ENCODE measurements at regions of chr13 and their contacts with region 1.

Region 1: GRCh38 chr13:97432917-97433726 is 847 bp upstream of the RAP2A start:
- DNase-seq: peak; percentile 98 to 99 (median 99)
- H3K4me3 ChIP-seq: peak overlapping the region; percentile 66 to 99 (median 90)
- H3K27ac ChIP-seq: peak overlapping the region; percentile 89 to 100 (median 100)
- H3K27me3 ChIP-seq: no peaks in the 10 kb centered on the region
- CTCF ChIP-seq: peak in 24 of 56 donors; percentile 1 to 46 (median 19)

Region 2: GRCh38 chr13:97221989-97222700 is 211.0 kb before region 1 on chr13 and contains the start of gene MBNL2:
- intact Hi-C with region 1: loop called (anchors 5 kb)
- DNase-seq: peak; percentile 91 to 99 (median 98)
- H3K4me3 ChIP-seq: peak within 1 kb of the TSS; percentile 54 to 96 (median 79)
- H3K27ac ChIP-seq: peak within 1 kb of the TSS; percentile 52 to 97 (median 92)
- H3K27me3 ChIP-seq: no peaks in the 10 kb centered on the region
- CTCF ChIP-seq: peak in 18 of 56 donors; percentile 3 to 38 (median 10)
- total RNA-seq, gene MBNL2: 96.2 to 275 (median 181) TPM

Region 3: GRCh38 chr13:97474349-97474980 is 41.3 kb after region 1 on chr13:
- intact Hi-C with region 1: loop called in 1 of 2 experiments (anchors 5 kb)
- DNase-seq: no peak
- H3K4me3 ChIP-seq: no peak overlapping the region
- H3K27ac ChIP-seq: no peak overlapping the region
- H3K27me3 ChIP-seq: no peaks in the 10 kb centered on the region
- CTCF ChIP-seq: no peak

Region 4: GRCh38 chr13:97724450-97724849 is 291.3 kb after region 1 on chr13:
- intact Hi-C with region 1: loop called in 1 of 2 experiments (anchors 5 kb)
- DNase-seq: peak in 1 of 10 donors; percentile 22
- H3K4me3 ChIP-seq: no peak overlapping the region
- H3K27ac ChIP-seq: peak overlapping the region in 49 of 59 donors; percentile 5 to 91 (median 68)
- H3K27me3 ChIP-seq: no peaks in the 10 kb centered on the region
- CTCF ChIP-seq: no peak

Region 5: GRCh38 chr13:97975848-97976609 is 542.9 kb after region 1 on chr13:
- intact Hi-C with region 1: loop called in 1 of 2 experiments (anchors 10 kb)
- DNase-seq: peak; percentile 74 to 95 (median 88)
- H3K4me3 ChIP-seq: peak overlapping the region; percentile 63 to 97 (median 87)
- H3K27ac ChIP-seq: peak overlapping the region; percentile 23 to 98 (median 90)
- H3K27me3 ChIP-seq: no peaks in the 10 kb centered on the region
- CTCF ChIP-seq: peak in 5 of 56 donors; percentile 7 to 30 (median 20)

Measured in dorsolateral prefrontal cortex (tissue), 120 donors.